ENCODE measurements at regions of chr12 and their contacts with region 1.

Region 1: GRCh38 chr12:67433385-67434175 is 164.4 kb downstream of the CAND1 start:
- DNase-seq: no peak
- H3K4me3 ChIP-seq: no peak overlapping the region
- H3K27ac ChIP-seq: peak overlapping the region in 1 of 4 donors; percentile 72
- H3K4me1 ChIP-seq: peaks cover 0 to 38% (median 28%) of the 10 kb centered on the region in 4 donors
- H3K27me3 ChIP-seq: no peaks in the 10 kb centered on the region
- CTCF ChIP-seq: no peak
- EP300 ChIP-seq: no peak
- POLR2A ChIP-seq: no peak

Region 2: GRCh38 chr12:67943226-67943892 is 509.8 kb after region 1 on chr12:
- intact Hi-C with region 1: loop called (anchors 5 kb)
- DNase-seq: peak; percentile 80
- H3K4me3 ChIP-seq: no peak overlapping the region
- H3K27ac ChIP-seq: peak overlapping the region in 3 of 4 donors; percentile 21 to 59 (median 48)
- H3K4me1 ChIP-seq: peaks cover 0 to 41% (median 17%) of the 10 kb centered on the region in 4 donors
- H3K27me3 ChIP-seq: no peaks in the 10 kb centered on the region
- CTCF ChIP-seq: peak; percentile 30 to 78 (median 64)
- EP300 ChIP-seq: no peak
- POLR2A ChIP-seq: no peak

Measured in sigmoid colon (tissue), 7 donors.